GM23248 (cell line): ENCODE measurements at regions of chr2 and their contacts with region 1.

Region 1: DNA sequence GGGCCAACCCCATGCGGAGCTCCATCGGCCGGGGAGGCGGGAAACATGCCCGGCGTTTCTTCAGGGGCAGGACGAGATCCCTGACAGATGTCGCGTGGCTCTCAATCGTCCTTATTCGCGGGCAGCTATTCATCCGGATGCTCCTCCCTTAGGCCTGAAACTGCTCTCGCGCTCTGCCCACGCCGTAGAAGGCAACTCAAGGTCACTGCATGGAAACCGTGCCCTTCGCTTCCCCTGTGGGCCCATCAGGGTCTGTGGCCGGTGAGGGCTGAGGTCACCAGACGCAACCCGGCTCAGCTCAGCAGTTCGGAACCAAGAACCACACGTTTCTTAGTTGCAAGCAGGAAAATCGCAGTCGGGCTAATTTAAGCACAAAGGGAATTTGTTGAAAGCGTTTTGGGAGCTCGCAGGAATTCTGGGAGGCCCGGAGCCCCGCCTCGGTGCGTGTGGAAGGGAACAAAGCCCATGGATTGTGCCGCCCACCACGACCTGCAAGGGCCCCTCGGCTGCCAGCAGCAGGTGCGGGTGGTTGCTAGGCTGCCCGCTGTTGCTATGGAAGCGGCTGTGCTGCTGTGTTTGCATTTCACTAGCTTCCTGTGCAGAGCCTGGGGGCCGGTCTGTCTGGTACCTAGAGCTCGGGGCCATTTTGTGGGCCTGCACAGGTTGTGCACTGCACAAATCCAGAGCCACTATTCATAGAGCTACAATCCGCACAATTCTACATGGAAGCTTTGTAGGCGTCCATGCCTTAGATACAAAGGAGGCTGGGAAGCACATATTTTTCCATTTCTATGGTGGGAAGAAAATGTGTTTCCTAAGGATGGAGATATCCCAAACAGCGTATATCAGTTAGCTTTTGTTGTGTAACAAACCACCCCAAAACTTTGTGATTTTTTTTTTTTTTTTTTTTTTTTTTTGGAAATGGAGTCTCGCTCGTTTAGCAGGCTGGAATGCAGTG is 6.0 kb upstream of the ALLC start:
- DNase-seq: peak; percentile 63
- H3K4me3 ChIP-seq: peak overlapping the region; percentile 59
- H3K27ac ChIP-seq: no peak overlapping the region
- H3K4me1 ChIP-seq: peaks cover 7% of the 10 kb centered on the region; the same call in 1 of the 2 replicates
- H3K27me3 ChIP-seq: peaks cover 11% of the 10 kb centered on the region; the same call in 1 of the 2 replicates

Region 2: GRCh38 chr2:1886405-1886992 is 1765.5 kb before region 1 on chr2:
- in situ Hi-C with region 1: loop called (anchors 25 kb)
- DNase-seq: peak; percentile 77
- H3K4me3 ChIP-seq: no peak overlapping the region
- H3K27ac ChIP-seq: no peak overlapping the region
- H3K4me1 ChIP-seq: no peaks in the 10 kb centered on the region
- H3K27me3 ChIP-seq: 0 out of 2 replicates have a peak, but pooled peaks cover 3% of the 10 kb centered on the region